ENCODE measurements at regions of chr19 and their contacts with region 1.

Region 1: DNA sequence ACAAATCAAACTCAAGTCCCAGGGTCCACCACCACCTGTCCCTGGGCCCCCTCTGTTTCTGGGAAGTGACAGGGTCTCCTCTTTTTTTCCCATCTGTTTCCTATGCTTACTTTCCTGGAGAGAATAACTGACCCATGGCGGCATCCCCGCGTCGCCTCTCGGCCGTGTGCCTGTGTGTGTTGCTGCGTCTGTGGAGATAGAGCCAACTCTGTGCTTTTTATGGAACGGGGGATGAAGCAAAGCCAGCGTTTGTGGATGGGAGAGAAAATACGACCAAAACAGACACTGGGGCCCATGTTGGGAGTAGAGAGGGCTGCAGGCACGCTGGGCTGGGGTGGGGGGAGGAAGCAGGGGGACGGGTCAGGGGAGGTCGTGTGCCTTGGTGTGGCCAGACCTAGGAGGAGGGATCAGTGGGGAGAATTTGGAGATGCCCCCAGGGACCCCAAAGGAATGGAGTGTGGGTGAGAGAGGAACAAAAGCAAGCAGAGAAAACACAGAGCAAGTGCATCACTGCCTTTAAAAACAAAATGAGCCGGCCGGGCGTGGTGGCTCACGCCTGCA is 16.6 kb downstream of the PLK5 start:
- DNase-seq: no peak
- ATAC-seq: no peak
- H3K4me3 Mint-ChIP-seq: no peak overlapping the region
- H3K27ac Mint-ChIP-seq: no peak overlapping the region
- H3K4me1 Mint-ChIP-seq: no peaks in the 10 kb centered on the region
- H3K27me3 Mint-ChIP-seq: peaks cover 18% of the 10 kb centered on the region
- CTCF ChIP-seq: no peak

Region 2: GRCh38 chr19:1523412-1524291 is 16.8 kb before region 1 on chr19 and contains the start of gene PLK5:
- CTCF ChIA-PET with region 1: no interaction called
- POLR2A ChIA-PET with region 1: no interaction called
- intact Hi-C with region 1: no loop called
- DNase-seq: no peak
- ATAC-seq: no peak
- H3K4me3 Mint-ChIP-seq: no peak within 1 kb of the TSS
- H3K27ac Mint-ChIP-seq: no peak within 1 kb of the TSS
- H3K4me1 Mint-ChIP-seq: peaks cover 5% of the 10 kb centered on the region
- H3K27me3 Mint-ChIP-seq: peaks cover 45% of the 10 kb centered on the region
- CTCF ChIP-seq: no peak
- total RNA-seq, gene PLK5: not detected in 2 replicates

Region 3: GRCh38 chr19:1568320-1569019 is 28.0 kb after region 1 on chr19 and contains the start of gene MEX3D:
- CTCF ChIA-PET with region 1: no interaction called
- POLR2A ChIA-PET with region 1: no interaction called
- intact Hi-C with region 1: no loop called
- DNase-seq: peak; percentile 77
- ATAC-seq: peak; percentile 93
- H3K4me3 Mint-ChIP-seq: peak within 1 kb of the TSS; percentile 57
- H3K27ac Mint-ChIP-seq: no peak within 1 kb of the TSS
- H3K4me1 Mint-ChIP-seq: peaks cover 5% of the 10 kb centered on the region
- H3K27me3 Mint-ChIP-seq: no peaks in the 10 kb centered on the region
- CTCF ChIP-seq: no peak
- total RNA-seq, gene MEX3D: 2.1 and 2.5 TPM in 2 replicates

Region 4: GRCh38 chr19:1652471-1653299 is 112.2 kb after region 1 on chr19 and contains the start of gene TCF3:
- CTCF ChIA-PET with region 1: no interaction called
- POLR2A ChIA-PET with region 1: no interaction called
- intact Hi-C with region 1: no loop called
- DNase-seq: peak; percentile 99
- ATAC-seq: peak; percentile 82
- H3K4me3 Mint-ChIP-seq: peak within 1 kb of the TSS; percentile 91
- H3K27ac Mint-ChIP-seq: peak within 1 kb of the TSS; percentile 95
- H3K4me1 Mint-ChIP-seq: peaks cover 68% of the 10 kb centered on the region
- H3K27me3 Mint-ChIP-seq: no peaks in the 10 kb centered on the region
- CTCF ChIP-seq: no peak
- total RNA-seq, gene TCF3: 139 and 143 TPM in 2 replicates

Region 5: DNA sequence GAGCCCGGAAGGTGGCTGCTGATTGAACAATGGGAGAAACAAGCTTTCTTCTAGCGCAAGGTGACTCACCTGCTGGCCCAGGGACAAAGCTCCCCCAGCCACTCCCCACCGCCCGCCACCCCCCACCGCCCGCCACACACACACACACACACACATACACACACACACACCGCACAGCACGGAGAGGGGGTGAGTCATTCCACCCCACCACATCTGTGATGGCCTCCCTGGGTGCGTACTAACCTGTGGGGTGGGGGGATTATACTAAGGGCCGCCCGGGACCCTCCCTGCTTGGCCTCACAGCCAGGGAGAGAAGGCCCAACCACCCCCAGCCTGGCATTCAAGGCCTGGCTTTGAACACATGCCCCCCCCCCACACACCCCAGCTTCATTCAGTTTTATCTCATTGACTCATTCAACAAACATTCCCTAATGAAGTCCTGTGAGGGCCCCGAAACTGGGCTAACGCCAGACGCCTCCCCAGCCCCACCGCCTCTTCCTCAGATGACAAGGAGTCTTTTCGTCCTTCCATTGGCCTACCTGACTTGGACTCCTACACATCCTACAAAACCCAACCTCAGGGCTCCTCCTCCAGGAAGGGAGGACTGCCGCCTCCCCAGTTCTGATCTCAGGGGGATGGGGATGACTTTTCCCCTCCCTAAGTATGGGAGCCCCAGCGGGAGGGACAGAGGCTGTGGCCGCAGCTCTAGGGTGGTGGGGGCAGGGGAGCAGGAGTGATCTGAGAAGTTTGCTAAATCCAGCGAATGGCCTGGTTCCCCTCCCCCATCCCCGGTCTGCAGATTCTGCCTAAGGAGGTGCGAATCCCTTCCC is 207.1 kb after region 1 on chr19:
- CTCF ChIA-PET with region 1: no interaction called
- POLR2A ChIA-PET with region 1: no interaction called
- intact Hi-C with region 1: no loop called
- DNase-seq: no peak
- ATAC-seq: peak; percentile 36
- H3K4me3 Mint-ChIP-seq: peak overlapping the region; percentile 68
- H3K27ac Mint-ChIP-seq: peak overlapping the region; percentile 63
- H3K4me1 Mint-ChIP-seq: peaks cover 26% of the 10 kb centered on the region
- H3K27me3 Mint-ChIP-seq: peaks cover 28% of the 10 kb centered on the region
- CTCF ChIP-seq: no peak

Region 6: DNA sequence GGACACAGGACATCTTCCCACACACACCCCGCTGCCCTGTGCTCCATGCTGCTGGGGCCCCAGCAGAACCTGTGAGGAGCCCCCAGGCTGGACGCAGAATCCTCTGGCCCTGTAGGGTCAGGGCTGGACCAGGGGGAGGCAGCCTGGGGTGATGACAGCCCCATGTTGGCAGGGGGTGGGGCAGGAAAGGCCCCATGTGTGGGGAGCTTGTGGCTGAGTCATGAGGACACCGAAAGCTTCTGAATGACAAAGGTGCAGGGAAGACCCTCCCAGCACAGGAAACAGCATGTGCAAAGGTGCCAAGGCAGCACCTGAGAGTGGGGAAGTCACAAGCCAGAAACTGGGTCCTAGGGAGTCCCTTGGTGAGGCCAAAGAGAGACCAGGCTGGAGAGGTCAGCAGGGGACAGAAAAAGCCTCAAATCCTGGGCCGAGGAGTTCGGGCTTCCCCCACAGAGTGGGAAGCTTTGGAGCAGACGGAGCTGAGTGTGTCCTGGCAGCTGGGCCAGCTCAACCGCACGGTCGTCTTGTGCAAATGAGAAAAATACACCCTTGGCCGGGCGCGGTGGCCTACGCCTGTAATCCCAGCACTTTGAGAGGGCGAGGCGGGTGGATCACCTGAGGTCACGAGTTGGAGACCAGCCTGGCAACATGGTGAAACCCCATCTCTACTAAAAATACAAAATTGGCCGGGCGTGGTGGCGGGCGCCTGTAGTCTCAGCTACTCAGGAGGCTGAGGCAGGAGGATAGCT is 254.2 kb after region 1 on chr19:
- CTCF ChIA-PET with region 1: interaction called, 18 read pairs
- POLR2A ChIA-PET with region 1: no interaction called
- intact Hi-C with region 1: no loop called
- DNase-seq: no peak
- ATAC-seq: no peak
- H3K4me3 Mint-ChIP-seq: no peak overlapping the region
- H3K27ac Mint-ChIP-seq: no peak overlapping the region
- H3K4me1 Mint-ChIP-seq: no peaks in the 10 kb centered on the region
- H3K27me3 Mint-ChIP-seq: peaks cover 15% of the 10 kb centered on the region
- CTCF ChIP-seq: no peak